ENCODE measurements at regions of chr15 and their contacts with region 1.

Region 1: GRCh38 chr15:67501177-67501835 is 19.6 kb upstream of the C15orf61 start:
- DNase-seq: no peak
- ATAC-seq: peak; percentile 78
- H3K4me3 ChIP-seq: no peak overlapping the region
- H3K27ac ChIP-seq: no peak overlapping the region
- H3K4me1 ChIP-seq: peaks cover 6% of the 10 kb centered on the region; the same call in 1 of the 2 replicates
- H3K27me3 ChIP-seq: no peaks in the 10 kb centered on the region
- CTCF ChIP-seq: peak; percentile 23 to 64 (median 41); a peak in 4 of 6 replicates
- EP300 ChIP-seq: no peak
- POLR2A ChIP-seq: no peak
- RAD21 ChIP-seq: peak; percentile 58

Region 2: DNA sequence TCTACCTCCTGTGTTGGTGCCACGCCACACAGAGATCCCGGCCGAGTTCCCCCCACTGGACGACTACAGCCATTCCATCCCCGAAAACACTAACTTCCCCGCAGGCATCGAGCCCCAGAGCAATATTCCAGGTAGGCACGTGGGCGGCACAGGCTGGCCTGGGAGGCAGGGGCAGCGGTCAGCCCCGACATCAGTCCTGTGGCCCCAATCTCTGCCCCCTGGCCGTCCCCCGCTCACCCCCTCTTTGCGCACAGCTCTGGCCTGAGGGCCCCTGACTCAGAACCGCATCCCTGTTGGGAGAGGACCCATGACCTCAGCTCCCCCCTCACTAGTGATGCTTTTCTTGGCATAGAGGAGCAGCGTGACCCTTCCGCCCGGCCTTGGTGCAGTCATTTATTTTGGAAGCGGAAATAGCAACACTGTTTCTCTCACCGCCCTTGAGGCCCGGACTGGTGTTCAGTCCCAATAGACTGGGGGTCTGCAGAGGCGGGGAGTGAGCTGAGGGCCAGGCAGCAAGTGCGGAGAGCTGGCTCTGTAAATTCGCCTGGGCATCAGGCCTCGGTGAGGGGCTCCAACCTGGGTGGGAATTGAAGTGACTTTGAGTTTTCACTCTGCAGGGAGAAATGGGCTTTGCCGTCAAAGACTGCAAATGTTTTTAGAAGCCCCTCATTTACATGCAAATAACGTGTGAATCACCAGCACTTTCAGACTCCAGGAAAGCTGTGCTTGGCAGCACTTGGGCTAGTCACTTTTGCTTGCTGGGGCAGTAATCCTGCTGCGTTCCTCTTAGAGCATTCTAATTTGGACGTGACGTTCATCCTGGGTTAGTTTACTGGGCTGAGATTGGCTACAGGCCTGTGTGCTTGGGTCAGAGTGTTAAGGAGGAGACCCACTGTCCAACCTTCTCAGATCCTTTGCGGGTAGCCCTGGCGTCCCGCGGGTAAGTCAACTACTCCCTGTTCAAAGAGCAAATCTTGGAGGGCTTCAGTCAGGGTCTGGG is 335.8 kb before region 1 on chr15:
- CTCF ChIA-PET with region 1: no interaction called
- POLR2A ChIA-PET with region 1: no interaction called
- RAD21 ChIA-PET with region 1: no interaction called
- SMC1A ChIA-PET with region 1: no interaction called
- in situ Hi-C with region 1: no loop called
- intact Hi-C with region 1: no loop called
- DNase-seq: no peak
- ATAC-seq: no peak
- H3K4me3 ChIP-seq: no peak overlapping the region
- H3K27ac ChIP-seq: no peak overlapping the region
- H3K4me1 ChIP-seq: no peaks in the 10 kb centered on the region
- H3K27me3 ChIP-seq: no peaks in the 10 kb centered on the region
- CTCF ChIP-seq: no peak
- EP300 ChIP-seq: no peak
- POLR2A ChIP-seq: no peak; the same call in 1 of the 2 replicates
- RAD21 ChIP-seq: no peak

Region 3: GRCh38 chr15:67511606-67512005 is 10.3 kb after region 1 on chr15:
- CTCF ChIA-PET with region 1: interaction called, 7 read pairs
- POLR2A ChIA-PET with region 1: interaction called, 4 read pairs
- RAD21 ChIA-PET with region 1: interaction called, 5 read pairs
- SMC1A ChIA-PET with region 1: interaction called, 16 read pairs
- in situ Hi-C with region 1: no loop called
- intact Hi-C with region 1: no loop called
- DNase-seq: no peak
- ATAC-seq: peak; percentile 22
- H3K4me3 ChIP-seq: no peak overlapping the region
- H3K27ac ChIP-seq: no peak overlapping the region
- H3K4me1 ChIP-seq: peaks cover 8% of the 10 kb centered on the region
- H3K27me3 ChIP-seq: no peaks in the 10 kb centered on the region
- CTCF ChIP-seq: no peak
- EP300 ChIP-seq: no peak
- POLR2A ChIP-seq: no peak
- RAD21 ChIP-seq: no peak

Region 4: GRCh38 chr15:67528513-67528912 is 27.2 kb after region 1 on chr15:
- CTCF ChIA-PET with region 1: interaction called, 5 read pairs
- POLR2A ChIA-PET with region 1: interaction called, 3 read pairs
- RAD21 ChIA-PET with region 1: interaction called, 6 read pairs
- SMC1A ChIA-PET with region 1: interaction called, 15 read pairs
- in situ Hi-C with region 1: no loop called
- intact Hi-C with region 1: no loop called
- DNase-seq: no peak
- ATAC-seq: no peak
- H3K4me3 ChIP-seq: no peak overlapping the region
- H3K27ac ChIP-seq: no peak overlapping the region
- H3K4me1 ChIP-seq: no peaks in the 10 kb centered on the region
- H3K27me3 ChIP-seq: no peaks in the 10 kb centered on the region
- CTCF ChIP-seq: no peak
- EP300 ChIP-seq: no peak
- POLR2A ChIP-seq: no peak
- RAD21 ChIP-seq: no peak

Region 5: GRCh38 chr15:67784090-67784781 is 282.9 kb after region 1 on chr15:
- CTCF ChIA-PET with region 1: interaction called, 11 read pairs
- POLR2A ChIA-PET with region 1: no interaction called
- RAD21 ChIA-PET with region 1: interaction called, 3 read pairs
- SMC1A ChIA-PET with region 1: interaction called, 13 read pairs
- in situ Hi-C with region 1: no loop called
- intact Hi-C with region 1: no loop called
- DNase-seq: peak; percentile 82
- ATAC-seq: peak; percentile 94
- H3K4me3 ChIP-seq: no peak overlapping the region
- H3K27ac ChIP-seq: peak overlapping the region; percentile 63
- H3K4me1 ChIP-seq: peaks cover 33% of the 10 kb centered on the region
- H3K27me3 ChIP-seq: no peaks in the 10 kb centered on the region
- CTCF ChIP-seq: 0 out of 6 replicates have a peak, but pooled peaks of 1 of the 3 experiments have one; percentile 9
- EP300 ChIP-seq: peak; percentile 73 to 88
- POLR2A ChIP-seq: no peak
- RAD21 ChIP-seq: no peak

Measured in GM12878 (cell line).